IMR-90 (cell line): ENCODE measurements at regions of chr14 and their contacts with region 1.

Region 1: DNA sequence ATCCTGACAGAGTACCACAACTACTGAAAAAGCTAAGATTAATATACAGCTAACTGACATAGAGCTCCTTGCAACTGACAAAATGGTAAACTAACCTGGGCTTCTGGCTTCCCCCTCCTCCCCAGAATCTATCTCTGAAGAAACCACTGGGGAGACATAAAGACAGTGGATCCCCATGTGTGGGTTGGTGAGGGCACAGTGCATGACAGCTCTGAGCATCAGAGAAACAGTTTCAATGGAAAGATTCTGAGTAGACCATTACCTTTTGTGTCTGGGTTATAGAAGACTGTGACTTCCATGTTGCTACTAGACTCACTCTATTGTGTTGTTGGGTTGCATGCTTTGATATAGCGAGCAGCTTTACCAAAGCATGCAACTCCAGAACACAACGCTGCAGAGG is 247.4 kb downstream of the EFCAB11 start:
- DNase-seq: no peak
- ATAC-seq: no peak
- H3K4me3 ChIP-seq: no peak overlapping the region
- H3K27ac ChIP-seq: no peak overlapping the region
- H3K4me1 ChIP-seq: peaks cover 2% of the 10 kb centered on the region
- H3K27me3 ChIP-seq: no peaks in the 10 kb centered on the region
- CTCF ChIP-seq: no peak
- POLR2A ChIP-seq: no peak
- RAD21 ChIP-seq: no peak

Region 2: DNA sequence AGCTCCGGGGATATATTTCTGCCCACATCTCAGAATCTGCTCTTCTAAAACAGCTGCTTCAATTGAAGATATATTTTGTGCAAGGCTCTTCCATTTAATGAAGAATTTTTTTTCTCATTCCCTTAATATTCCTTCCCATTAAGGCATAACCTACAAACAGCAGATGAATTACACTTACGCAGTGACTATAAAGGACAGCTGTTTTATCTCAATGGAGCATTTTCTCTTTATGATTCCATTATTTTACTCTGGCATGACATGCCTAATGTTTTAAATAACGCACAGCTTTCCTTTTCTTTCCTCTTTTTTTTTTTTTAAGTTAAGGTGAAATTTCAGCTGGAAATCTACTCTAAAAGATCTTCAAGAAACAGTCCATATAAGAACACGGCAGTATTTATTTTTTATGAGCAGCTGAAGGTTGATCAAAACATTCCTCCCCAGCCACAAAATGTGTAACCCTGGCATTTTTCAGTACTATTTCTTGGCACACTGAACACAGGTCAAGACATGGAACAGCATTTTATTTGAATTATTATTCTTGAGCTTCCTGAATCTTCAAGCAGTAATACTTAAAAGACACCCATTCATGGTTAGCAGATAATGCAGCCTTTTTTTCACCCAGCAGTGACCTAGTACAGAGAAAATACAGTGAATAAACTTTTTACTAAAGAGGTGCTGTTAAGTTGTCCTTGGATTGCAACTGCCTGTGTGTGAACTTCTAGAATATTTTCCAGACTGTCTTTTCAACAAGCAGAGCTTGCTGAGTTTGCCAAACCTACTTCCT is 172.0 kb before region 1 on chr14:
- CTCF ChIA-PET with region 1: no interaction called
- POLR2A ChIA-PET with region 1: no interaction called
- dilution Hi-C with region 1: no loop called
- in situ Hi-C with region 1: no loop called
- intact Hi-C with region 1: no loop called
- DNase-seq: peak; percentile 72
- ATAC-seq: peak; percentile 83
- H3K4me3 ChIP-seq: no peak overlapping the region
- H3K27ac ChIP-seq: no peak overlapping the region
- H3K4me1 ChIP-seq: peaks cover 18% of the 10 kb centered on the region
- H3K27me3 ChIP-seq: no peaks in the 10 kb centered on the region
- CTCF ChIP-seq: no peak
- POLR2A ChIP-seq: no peak
- RAD21 ChIP-seq: no peak

Region 3: DNA sequence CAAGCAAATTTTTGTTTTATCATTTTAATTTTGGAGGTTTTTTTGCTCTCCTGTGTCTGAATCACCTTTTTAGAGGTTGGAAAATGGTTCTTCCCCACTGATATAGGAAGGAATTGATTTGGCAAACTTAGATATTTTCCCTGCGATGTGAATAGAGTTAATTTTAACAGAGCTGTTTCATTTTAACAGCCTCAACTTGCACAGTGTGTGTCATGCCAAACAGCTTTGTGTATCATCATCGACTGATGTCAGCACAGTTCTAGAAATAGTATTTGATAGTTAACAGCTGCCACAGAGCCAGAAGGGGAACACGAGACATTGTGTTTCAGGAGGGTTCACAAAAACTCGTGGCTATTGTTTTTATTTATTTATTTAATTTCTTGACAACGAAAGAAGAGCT is 46.9 kb before region 1 on chr14:
- CTCF ChIA-PET with region 1: no interaction called
- POLR2A ChIA-PET with region 1: no interaction called
- dilution Hi-C with region 1: no loop called
- in situ Hi-C with region 1: no loop called
- intact Hi-C with region 1: no loop called
- DNase-seq: peak; percentile 84
- ATAC-seq: peak; percentile 74
- H3K4me3 ChIP-seq: no peak overlapping the region
- H3K27ac ChIP-seq: no peak overlapping the region
- H3K4me1 ChIP-seq: peaks cover 3% of the 10 kb centered on the region
- H3K27me3 ChIP-seq: no peaks in the 10 kb centered on the region
- CTCF ChIP-seq: no peak
- POLR2A ChIP-seq: no peak
- RAD21 ChIP-seq: no peak

Region 4: GRCh38 chr14:89760086-89760485 is 53.0 kb after region 1 on chr14:
- CTCF ChIA-PET with region 1: no interaction called
- POLR2A ChIA-PET with region 1: interaction called, 12 read pairs
- dilution Hi-C with region 1: no loop called
- in situ Hi-C with region 1: no loop called
- intact Hi-C with region 1: no loop called
- DNase-seq: no peak
- ATAC-seq: no peak
- H3K4me3 ChIP-seq: no peak overlapping the region
- H3K27ac ChIP-seq: no peak overlapping the region
- H3K4me1 ChIP-seq: peaks cover 2% of the 10 kb centered on the region; the same call in 1 of the 2 replicates
- H3K27me3 ChIP-seq: no peaks in the 10 kb centered on the region
- CTCF ChIP-seq: no peak
- POLR2A ChIP-seq: no peak
- RAD21 ChIP-seq: no peak